ENCODE measurements at regions of chr1 and their contacts with region 1.

Region 1: DNA sequence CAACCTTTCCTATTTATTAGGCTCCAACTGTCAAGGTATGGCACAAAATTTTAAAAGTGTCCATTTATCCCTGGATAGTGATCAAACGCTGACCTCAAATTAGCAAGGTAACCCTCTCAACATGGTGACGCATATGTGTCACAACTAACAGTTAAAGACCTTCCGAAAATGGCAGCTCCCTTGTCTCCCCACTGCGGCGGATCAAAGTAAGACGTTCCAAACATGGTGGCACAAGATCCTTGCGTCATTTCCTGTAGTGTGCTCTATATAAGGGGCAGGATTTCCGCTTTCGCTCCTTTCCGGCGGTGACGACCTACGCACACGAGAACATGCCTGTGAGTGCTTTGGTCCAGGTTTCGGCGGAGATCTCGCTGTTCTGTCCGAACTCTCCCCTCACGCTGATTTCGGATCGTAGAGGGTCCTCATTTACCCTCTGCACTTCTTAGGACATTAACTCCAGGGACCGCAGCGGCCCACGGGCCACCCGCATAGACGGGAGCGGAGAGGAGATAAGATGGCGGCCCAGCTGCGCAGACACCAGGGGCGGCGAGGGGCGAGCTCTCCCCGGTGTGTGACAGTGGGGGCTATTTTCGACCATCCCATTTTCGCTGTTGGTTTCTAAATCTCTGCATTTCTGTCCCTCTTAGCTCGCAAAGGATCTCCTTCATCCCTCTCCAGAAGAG is at the start of gene RPS27:
- DNase-seq: peak; percentile 98
- H3K4me3 ChIP-seq: peak within 1 kb of the TSS; percentile 85 to 94 (median 87)
- H3K27ac ChIP-seq: peak within 1 kb of the TSS; percentile 91 to 97 (median 95)
- H3K4me1 ChIP-seq: peaks cover 35 to 58% (median 56%) of the 10 kb centered on the region in 4 donors
- H3K27me3 ChIP-seq: no peaks in the 10 kb centered on the region
- CTCF ChIP-seq: no peak
- EP300 ChIP-seq: no peak
- POLR2A ChIP-seq: peak; percentile 99
- total RNA-seq, gene RPS27: 1,242 to 3,317 (median 2,693) TPM

Region 2: DNA sequence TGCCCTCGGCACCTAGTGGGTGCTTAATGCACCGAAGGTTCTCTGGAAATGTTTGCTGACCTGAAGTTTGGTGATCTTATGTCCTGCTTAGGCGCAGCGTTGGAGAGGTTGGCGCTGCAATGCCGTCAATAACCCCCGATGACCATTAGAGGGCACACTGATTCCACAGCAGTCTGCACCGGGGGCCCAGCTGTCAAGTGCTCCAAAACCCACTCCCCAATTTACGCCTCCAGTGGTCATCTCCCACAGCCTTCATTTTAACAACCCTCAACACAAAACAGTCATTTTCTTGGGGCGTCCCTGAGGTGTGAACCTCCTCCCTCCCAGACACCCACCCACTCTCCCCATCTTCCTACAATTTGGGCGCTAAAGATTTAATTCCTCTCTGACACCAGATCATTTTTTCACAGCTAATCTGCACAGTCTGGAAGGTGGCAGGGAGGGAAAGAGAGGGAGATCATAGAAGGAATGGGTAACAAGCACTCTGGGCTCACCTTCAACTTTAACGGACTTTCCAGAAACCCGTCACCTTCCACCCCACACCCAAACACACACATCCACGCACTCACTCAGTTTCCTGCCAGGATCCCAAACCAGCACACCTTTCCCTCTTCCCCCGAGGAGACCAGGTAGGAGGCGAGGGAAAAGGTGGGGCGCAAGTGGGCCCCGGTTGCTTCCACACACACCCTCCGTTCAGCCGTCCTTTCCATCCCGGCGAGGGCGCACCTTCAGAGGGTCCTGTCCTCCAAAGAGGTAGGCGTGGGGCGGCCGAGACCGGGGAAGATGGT is 312.7 kb before region 1 on chr1:
- intact Hi-C with region 1: loop called (anchors 5 kb)
- DNase-seq: no peak
- H3K4me3 ChIP-seq: peak overlapping the region; percentile 58 to 78 (median 62)
- H3K27ac ChIP-seq: peak overlapping the region; percentile 68 to 79 (median 72)
- H3K4me1 ChIP-seq: peaks cover 21 to 36% (median 35%) of the 10 kb centered on the region in 4 donors
- H3K27me3 ChIP-seq: peaks cover 0 to 29% (median 5%) of the 10 kb centered on the region in 4 donors
- CTCF ChIP-seq: peak; percentile 85 to 93 (median 89)
- EP300 ChIP-seq: no peak
- POLR2A ChIP-seq: no peak

Region 3: GRCh38 chr1:153796791-153797659 is 193.6 kb before region 1 on chr1:
- intact Hi-C with region 1: loop called (anchors 2 kb)
- DNase-seq: no peak
- H3K4me3 ChIP-seq: no peak overlapping the region
- H3K27ac ChIP-seq: no peak overlapping the region
- H3K4me1 ChIP-seq: peaks cover 0 to 8% (median 1%) of the 10 kb centered on the region in 4 donors
- H3K27me3 ChIP-seq: no peaks in the 10 kb centered on the region
- CTCF ChIP-seq: peak; percentile 89 to 93 (median 91)
- EP300 ChIP-seq: no peak
- POLR2A ChIP-seq: no peak

Region 4: GRCh38 chr1:153946622-153947241 is 43.9 kb before region 1 on chr1 and contains the start of gene DENND4B:
- intact Hi-C with region 1: loop called (anchors 5 kb)
- DNase-seq: no peak
- H3K4me3 ChIP-seq: peak within 1 kb of the TSS; percentile 78 to 98 (median 88)
- H3K27ac ChIP-seq: peak within 1 kb of the TSS; percentile 98 to 100 (median 98)
- H3K4me1 ChIP-seq: peaks cover 27 to 37% (median 29%) of the 10 kb centered on the region in 4 donors
- H3K27me3 ChIP-seq: no peaks in the 10 kb centered on the region
- CTCF ChIP-seq: peak in 2 of 3 experiments; percentile 95 to 99
- EP300 ChIP-seq: no peak
- POLR2A ChIP-seq: no peak
- total RNA-seq, gene DENND4B: 19.2 to 30.4 (median 26.2) TPM

Region 5: GRCh38 chr1:154183045-154183915 is 192.7 kb after region 1 on chr1:
- intact Hi-C with region 1: loop called (anchors 5 kb)
- DNase-seq: peak; percentile 99
- H3K4me3 ChIP-seq: peak overlapping the region; percentile 66 to 97 (median 95)
- H3K27ac ChIP-seq: peak overlapping the region; percentile 88 to 95 (median 92)
- H3K4me1 ChIP-seq: peaks cover 38 to 49% (median 46%) of the 10 kb centered on the region in 4 donors
- H3K27me3 ChIP-seq: no peaks in the 10 kb centered on the region
- CTCF ChIP-seq: peak in 1 of 3 experiments; percentile 20
- EP300 ChIP-seq: no peak
- POLR2A ChIP-seq: peak; percentile 97

Measured in esophagus muscularis mucosa (tissue), 4 donors.